SK-N-SH (cell line): ENCODE measurements at regions of chr14 and their contacts with region 1.

Region 1: DNA sequence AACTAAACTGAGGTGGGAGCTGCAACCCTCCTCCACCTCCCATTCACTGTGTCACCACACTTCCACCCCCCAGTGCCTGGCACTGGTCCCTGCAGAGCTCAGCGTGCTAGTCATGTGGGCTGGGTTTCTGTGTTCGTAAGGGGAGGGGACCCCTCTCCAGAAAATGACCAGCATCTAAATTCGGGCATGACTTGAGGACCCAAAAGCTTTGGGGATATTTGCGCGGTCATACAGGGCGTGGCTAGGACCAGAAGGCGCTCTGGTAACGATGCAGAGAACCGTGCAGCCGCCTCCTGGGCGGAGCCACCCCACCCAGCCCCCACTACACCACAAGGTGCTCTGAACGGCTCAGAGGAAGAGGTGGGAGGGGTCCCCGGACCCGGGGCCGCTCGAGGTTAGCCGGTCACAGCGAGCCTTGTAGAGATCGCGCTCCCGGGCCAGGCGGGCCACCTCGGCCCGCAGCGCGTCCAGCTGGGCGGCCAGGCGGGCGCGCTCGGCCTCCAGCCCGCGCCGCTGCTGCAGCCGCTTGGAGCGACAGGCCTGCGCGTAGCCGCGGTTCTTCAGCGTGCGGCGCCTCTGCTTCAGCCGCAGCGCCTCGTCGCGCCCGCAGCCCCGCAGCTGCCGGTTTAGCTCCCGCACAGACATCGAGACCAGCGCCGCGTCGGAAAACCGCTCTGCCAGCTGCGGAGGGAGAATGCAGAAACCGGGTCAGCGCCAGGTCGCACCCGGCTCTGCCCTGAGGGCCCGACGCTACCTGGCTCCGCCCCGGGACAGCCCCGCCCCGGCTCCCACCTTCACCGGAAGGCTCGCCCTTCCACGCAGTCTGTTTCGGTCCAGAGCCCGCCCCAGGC is 9.8 kb downstream of the CPNE6 start:
- DNase-seq: peak; percentile 85
- H3K4me3 ChIP-seq: peak overlapping the region; percentile 57 to 59
- H3K27ac ChIP-seq: peak overlapping the region in 1 of 2 experiments; percentile 73; a peak in 2 of 4 replicates
- H3K4me1 ChIP-seq: peaks cover 0 to 30% of the 10 kb centered on the region in 2 experiments; a peak in 1 of 4 replicates
- H3K27me3 ChIP-seq: peaks cover 5% of the 10 kb centered on the region; the same call in 1 of the 2 replicates
- CTCF ChIP-seq: no peak
- EP300 ChIP-seq: no peak
- RAD21 ChIP-seq: no peak

Region 2: DNA sequence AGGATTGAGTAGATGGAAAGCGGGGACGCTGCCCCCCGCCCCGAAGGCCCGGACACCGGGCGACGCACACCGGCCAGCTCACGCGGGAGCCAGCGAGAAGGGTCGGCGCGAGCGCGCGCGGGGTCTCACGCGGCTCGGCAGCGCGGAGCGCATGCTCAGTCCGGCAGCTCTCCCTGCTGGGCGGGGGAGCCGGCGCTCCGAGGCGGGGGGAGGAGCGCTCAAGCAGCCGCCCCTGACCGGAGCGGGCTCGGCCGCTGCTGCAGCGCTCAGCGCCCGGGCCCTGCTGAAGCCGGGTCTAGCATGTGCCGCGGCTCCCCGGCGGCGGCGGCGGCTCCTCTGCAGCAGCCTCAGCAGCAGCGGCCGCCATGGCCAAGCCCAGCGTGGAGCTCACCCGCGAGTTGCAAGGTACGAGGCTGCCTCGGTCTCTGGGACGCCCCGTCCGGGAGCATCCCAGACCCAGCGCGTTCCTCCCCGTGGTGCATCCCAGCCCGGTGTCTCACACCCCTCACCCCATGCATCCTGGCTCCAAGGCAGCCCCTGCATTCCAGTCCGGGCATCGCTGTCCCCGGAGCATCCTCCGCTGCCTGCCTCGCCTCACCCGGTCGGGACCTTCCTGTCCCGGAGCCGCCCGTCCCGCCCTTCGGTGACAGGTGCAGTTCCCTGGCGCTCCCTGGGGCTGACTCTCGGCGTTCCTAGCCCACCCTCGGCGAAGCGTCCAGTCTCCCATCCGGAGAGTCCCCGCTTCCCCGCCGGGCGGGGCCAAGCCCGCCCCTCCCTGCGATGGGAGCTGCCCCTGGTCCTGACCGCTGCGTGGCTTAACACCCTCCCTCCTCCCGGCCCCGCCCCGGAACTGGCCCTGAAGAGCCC is 29.1 kb before region 1 on chr14 and contains the start of gene CARMIL3:
- CTCF ChIA-PET with region 1: interaction called, 284 read pairs
- POLR2A ChIA-PET with region 1: interaction called, 27 read pairs
- DNase-seq: peak; percentile 97
- H3K4me3 ChIP-seq: peak within 1 kb of the TSS; percentile 72 to 80
- H3K27ac ChIP-seq: peak within 1 kb of the TSS in 1 of 2 experiments; percentile 81; a peak in 2 of 4 replicates
- H3K4me1 ChIP-seq: peaks cover 0 to 18% of the 10 kb centered on the region in 2 experiments; a peak in 1 of 4 replicates
- H3K27me3 ChIP-seq: no peaks in the 10 kb centered on the region; the same call in 1 of the 2 replicates
- CTCF ChIP-seq: no peak
- EP300 ChIP-seq: no peak
- RAD21 ChIP-seq: no peak
- polyA plus RNA-seq, gene CARMIL3: 0.32 and 0.43 TPM in 2 replicates

Region 3: DNA sequence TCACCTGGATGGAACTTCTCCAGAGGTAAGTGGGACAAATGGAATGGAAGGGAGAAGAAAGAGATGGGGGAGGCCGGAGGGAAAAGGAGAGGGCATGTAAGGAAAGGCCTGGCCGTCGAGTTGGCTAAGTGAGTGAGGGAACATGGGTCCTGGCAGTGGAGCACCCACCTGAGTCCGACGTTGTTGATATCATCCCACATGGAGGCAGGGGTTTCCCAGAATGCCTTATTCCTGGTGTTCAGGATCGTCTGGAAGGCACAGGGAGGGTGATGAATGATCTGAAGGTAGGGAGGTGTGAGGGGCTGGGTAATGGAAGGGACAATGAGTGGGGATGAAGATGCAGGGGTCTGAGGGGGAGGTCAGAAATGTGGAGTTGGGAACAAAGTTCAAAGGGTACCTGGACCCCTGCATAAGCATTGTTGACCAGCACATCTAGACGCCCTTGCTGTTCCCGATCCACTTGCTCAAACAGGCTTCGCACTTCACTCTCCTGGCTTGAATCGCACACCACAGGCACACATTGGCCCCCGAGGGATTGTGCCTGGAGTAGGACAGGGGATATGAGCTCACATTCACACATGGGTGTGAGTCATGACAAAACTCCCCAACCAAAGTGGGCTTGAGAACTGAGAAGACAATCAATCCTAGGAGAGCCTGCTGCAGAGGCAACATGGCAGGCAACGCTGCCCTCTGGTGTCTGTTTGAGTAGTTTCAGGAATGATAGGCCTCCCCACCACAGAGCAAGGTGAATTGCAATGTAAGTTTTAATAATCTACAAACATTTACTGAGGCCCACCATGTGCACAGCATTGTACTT is 215.4 kb after region 1 on chr14:
- CTCF ChIA-PET with region 1: no interaction called
- POLR2A ChIA-PET with region 1: no interaction called
- DNase-seq: peak; percentile 77
- H3K4me3 ChIP-seq: no peak overlapping the region; a peak in 1 of 4 replicates
- H3K27ac ChIP-seq: peak overlapping the region in 1 of 2 experiments; percentile 32; a peak in 1 of 4 replicates
- H3K4me1 ChIP-seq: peaks cover 13 to 14% of the 10 kb centered on the region in 2 experiments
- H3K27me3 ChIP-seq: no peaks in the 10 kb centered on the region
- CTCF ChIP-seq: peak; percentile 82
- EP300 ChIP-seq: no peak
- RAD21 ChIP-seq: peak; percentile 82

Region 4: GRCh38 chr14:24389201-24389848 is 308.2 kb after region 1 on chr14:
- CTCF ChIA-PET with region 1: no interaction called
- POLR2A ChIA-PET with region 1: no interaction called
- DNase-seq: no peak
- H3K4me3 ChIP-seq: no peak overlapping the region
- H3K27ac ChIP-seq: no peak overlapping the region
- H3K4me1 ChIP-seq: no peaks in the 10 kb centered on the region; a peak in 2 of 4 replicates
- H3K27me3 ChIP-seq: no peaks in the 10 kb centered on the region
- CTCF ChIP-seq: no peak
- EP300 ChIP-seq: no peak
- RAD21 ChIP-seq: no peak